ENCODE measurements at regions of chr2 and their contacts with region 1.

Region 1: GRCh38 chr2:71882949-71883472 is 264.7 kb downstream of the CYP26B1 start:
- DNase-seq: peak; percentile 96 to 99
- ATAC-seq: peak; percentile 70 to 80
- H3K4me3 ChIP-seq: no peak overlapping the region
- H3K27ac ChIP-seq: peak overlapping the region; percentile 79 to 90 (median 86)
- H3K4me1 ChIP-seq: peaks cover 45 to 47% of the 10 kb centered on the region in 2 donors
- H3K27me3 ChIP-seq: no peaks in the 10 kb centered on the region
- CTCF ChIP-seq: no peak
- POLR2A ChIP-seq: no peak

Region 2: DNA sequence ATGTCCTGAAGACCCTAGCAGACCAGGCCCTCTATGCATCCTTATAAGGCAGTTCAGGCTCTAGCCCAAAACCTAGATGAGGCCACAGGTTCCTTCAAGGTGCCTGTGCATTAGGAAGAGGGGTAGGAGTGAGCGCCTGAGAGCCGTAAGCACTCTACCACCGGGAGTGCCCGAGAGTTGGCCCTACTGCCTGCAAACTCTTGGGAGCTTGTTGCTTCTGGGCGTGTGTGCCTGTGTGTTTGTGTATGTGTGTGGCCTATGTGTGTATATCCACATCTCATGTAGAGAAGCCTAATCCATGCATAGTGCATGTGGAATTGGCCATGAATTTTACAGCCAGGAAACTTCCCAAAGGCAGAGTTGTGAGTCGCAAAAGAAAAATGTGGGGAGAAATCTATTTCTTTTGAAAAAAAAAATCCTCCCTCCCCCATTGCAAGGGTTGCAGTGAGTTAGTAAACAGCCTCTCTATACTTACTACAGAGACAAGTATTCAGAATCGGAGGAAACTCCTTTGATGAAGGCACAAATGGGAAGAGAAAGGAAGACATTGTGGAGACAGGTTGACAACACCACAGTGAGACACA is 1211.8 kb before region 1 on chr2:
- in situ Hi-C with region 1: no loop called
- intact Hi-C with region 1: no loop called
- DNase-seq: no peak
- ATAC-seq: no peak
- H3K4me3 ChIP-seq: no peak overlapping the region
- H3K27ac ChIP-seq: no peak overlapping the region
- H3K4me1 ChIP-seq: no peaks in the 10 kb centered on the region
- H3K27me3 ChIP-seq: no peaks in the 10 kb centered on the region
- CTCF ChIP-seq: no peak
- POLR2A ChIP-seq: no peak

Region 3: DNA sequence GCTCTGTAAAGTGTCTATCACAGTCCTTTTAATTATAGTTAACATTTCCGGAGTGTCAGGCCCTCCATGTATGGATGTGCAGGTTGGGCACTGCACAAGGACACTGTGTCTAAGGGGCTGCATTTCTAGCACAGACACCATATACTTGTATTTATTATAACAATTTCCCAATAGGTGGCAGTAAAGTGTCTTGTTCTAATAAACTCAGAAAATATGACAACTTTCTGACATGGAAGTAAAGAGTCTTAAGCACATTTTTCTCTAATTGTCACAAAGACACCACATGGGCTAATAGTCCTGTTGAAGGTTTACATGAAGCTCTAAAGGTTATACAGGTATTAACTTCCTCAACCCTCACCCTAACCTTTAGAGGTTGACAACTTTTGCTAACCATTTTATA is 273.1 kb before region 1 on chr2:
- in situ Hi-C with region 1: no loop called
- intact Hi-C with region 1: loop called (anchors 10 kb)
- DNase-seq: no peak
- ATAC-seq: peak; percentile 38 to 50
- H3K4me3 ChIP-seq: no peak overlapping the region
- H3K27ac ChIP-seq: peak overlapping the region; percentile 5 to 45 (median 15)
- H3K4me1 ChIP-seq: peaks cover 16% of the 10 kb centered on the region in 2 donors
- H3K27me3 ChIP-seq: no peaks in the 10 kb centered on the region
- CTCF ChIP-seq: peak in 2 of 5 experiments; percentile 27 to 29
- POLR2A ChIP-seq: no peak

Region 4: DNA sequence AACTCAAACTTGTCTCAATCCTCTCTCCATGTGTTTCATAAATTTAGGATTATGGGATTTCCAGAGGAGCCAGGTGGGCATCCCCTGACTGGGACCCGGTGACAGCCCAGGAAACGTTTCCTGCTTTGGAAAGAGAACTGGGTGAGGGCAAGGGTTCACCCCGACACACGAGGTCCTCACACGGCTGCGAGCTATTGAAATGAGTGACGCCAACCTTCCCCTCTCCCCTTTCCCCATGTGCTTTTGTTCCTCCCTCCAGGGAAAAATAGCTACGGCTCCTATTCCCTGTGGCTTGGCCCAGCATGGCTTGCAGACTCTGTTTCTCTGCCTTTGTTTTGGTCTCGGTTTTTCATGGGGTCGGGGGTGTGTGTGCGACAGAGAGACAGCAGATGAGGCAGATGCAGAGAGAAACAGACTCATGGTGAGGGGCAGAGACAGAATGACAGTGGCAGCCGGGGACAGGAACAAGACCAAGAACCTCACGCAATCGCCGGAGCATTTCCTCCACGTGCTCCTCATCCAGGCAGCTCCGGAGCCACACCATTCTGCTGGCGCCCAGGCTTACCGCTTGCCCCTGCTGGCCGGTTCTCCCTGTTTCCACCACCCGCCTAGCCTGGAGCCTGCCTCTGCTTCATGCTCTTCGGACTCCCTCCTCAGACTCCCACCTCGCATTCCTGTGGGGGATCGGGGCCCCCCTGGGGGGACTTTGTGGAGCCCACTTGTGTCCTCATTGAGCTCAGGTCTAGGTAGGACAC is 191.1 kb before region 1 on chr2:
- in situ Hi-C with region 1: no loop called
- intact Hi-C with region 1: loop called (anchors 5 kb)
- DNase-seq: peak; percentile 85 to 88
- ATAC-seq: peak; percentile 83 to 89
- H3K4me3 ChIP-seq: peak overlapping the region in 1 of 4 donors; percentile 13
- H3K27ac ChIP-seq: peak overlapping the region; percentile 85 to 92 (median 90)
- H3K4me1 ChIP-seq: peaks cover 27 to 46% of the 10 kb centered on the region in 2 donors
- H3K27me3 ChIP-seq: no peaks in the 10 kb centered on the region
- CTCF ChIP-seq: peak in 4 of 5 experiments; percentile 25 to 38 (median 28)
- POLR2A ChIP-seq: peak; percentile 54 to 64

Region 5: DNA sequence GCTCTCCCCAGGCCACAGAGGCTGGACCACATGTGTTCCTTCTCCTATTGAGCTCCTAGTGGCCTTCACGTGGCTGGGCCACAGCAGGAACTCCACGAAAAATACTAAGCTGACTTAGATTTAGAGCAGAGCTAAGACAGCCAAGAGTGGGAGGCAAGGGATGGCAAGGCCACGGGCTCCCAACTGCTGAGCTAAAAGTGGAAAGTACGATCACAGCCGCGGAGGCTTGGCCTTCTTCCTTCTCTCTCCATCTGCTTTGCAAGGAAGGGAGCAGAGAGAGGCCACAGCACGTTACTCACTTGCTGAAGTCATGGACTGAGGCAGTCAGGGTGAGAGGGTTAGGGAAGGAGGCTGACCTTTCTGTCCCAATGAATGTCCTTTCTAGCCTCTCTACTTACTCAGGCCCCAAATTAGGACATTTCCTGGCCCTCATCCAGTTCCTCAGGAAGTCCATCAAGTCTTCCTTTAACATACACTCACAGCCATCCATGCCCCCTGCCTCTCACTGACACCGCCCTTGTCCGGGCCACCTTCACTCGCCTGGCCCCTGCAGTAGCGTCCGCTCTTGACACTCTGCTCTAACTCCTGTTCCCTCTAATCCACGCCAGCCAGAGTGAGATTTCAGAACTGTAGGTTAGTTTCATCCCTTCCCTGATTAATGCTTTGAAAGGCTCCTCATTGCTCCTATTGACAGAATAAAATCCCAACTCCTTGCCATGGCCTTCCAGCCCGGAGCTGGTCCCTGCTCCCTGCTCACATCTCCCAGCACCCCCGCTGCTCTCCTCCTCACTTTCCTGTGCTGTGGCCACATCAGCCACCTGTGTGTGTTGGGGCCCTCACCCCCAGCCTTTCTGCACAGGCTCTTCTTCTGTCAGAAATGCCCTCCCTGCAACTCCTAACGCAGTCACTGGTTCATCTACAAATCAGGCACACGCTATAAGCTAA is 60.5 kb after region 1 on chr2:
- in situ Hi-C with region 1: no loop called
- intact Hi-C with region 1: loop called (anchors 2 kb)
- DNase-seq: peak; percentile 38 to 64
- ATAC-seq: peak; percentile 9 to 16
- H3K4me3 ChIP-seq: no peak overlapping the region
- H3K27ac ChIP-seq: peak overlapping the region; percentile 49 to 92 (median 74)
- H3K4me1 ChIP-seq: peaks cover 41 to 49% of the 10 kb centered on the region in 2 donors
- H3K27me3 ChIP-seq: no peaks in the 10 kb centered on the region
- CTCF ChIP-seq: no peak
- POLR2A ChIP-seq: no peak

Region 6: DNA sequence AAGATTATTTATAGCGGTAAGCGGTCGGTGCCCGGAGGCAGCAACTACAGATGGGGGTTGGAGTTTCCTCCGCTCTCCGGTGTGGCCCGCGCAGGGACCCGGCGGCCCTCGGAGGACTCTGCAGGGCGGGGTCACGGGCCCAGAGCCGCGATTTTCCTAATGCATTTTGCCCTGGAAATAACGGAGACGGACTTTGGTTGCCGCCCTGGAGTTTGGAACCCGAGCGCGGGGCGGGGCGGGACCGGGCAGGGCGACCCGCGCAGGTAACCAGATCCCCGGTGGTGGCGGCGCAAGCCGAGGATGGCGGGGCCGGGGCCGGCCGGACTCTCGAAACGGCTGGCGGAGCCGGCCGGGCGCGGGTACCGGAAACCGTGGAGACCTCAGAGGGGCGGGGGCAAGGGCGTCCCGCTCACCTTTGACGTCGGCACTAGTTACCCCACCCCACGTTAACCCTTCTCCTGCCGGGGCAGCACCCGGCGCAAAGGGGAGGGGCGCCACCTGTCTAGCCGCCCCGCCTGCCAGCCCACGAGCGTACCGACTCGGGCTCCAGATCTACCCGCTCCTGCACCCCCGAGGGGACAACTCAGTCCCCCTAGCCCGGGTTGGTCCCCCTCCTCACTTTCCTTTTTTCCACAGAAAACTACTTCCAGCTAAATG is 261.7 kb after region 1 on chr2:
- in situ Hi-C with region 1: no loop called
- intact Hi-C with region 1: loop called (anchors 2 kb)
- DNase-seq: peak in 1 of 2 donors; percentile 39
- ATAC-seq: peak; percentile 7 to 24
- H3K4me3 ChIP-seq: peak overlapping the region; percentile 55 to 75 (median 66)
- H3K27ac ChIP-seq: peak overlapping the region; percentile 27 to 66 (median 34)
- H3K4me1 ChIP-seq: peaks cover 50 to 68% of the 10 kb centered on the region in 2 donors
- H3K27me3 ChIP-seq: peaks cover 40 to 44% (median 40%) of the 10 kb centered on the region in 3 donors
- CTCF ChIP-seq: no peak
- POLR2A ChIP-seq: no peak

Measured in gastrocnemius medialis (tissue), 4 donors.